GM13976 (cell line): ENCODE measurements at regions of chr1 and their contacts with region 1.

Region 1: GRCh38 chr1:205645519-205645918 is 13.7 kb upstream of the ELK4 start:
- DNase-seq: no peak
- CTCF ChIP-seq: no peak

Region 2: DNA sequence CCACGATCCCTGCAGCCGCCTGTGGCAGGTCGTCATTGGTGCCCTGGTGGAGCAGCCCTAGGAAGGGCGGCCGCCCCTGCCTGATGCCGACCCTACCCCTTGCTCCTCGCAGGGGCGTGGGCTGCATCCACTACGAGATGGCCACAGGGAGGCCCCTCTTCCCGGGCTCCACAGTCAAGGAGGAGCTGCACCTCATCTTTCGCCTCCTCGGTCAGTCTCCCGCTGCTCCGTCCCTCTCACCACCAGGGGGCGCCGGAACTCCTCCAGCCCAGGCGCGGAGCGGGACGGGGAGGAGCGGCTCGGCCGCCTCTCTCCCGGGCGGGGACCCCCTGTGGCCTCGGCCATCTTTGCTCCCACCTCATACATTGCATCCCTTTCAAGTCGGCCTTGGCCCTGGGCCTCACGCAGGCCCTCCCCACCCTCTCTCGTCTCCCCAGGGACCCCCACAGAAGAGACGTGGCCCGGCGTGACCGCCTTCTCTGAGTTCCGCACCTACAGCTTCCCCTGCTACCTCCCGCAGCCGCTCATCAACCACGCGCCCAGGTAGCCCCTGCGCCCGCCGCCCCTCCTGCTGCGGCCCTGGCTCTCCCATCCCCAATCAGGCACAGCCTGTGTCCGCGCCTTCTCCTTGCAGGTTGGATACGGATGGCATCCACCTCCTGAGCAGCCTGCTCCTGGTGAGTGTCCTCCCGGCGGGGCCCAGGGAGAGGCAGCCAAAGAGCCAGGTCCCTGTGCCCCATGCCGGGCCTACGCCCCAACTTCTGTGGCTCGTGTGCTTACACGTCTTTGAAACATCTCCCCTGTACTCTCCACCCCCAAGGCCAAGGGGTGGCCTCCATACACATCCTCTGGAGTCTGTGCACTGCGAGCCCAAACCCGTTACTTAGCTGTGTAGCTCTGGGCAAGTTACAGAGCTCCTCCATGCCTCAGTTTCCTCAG is 116.4 kb before region 1 on chr1:
- in situ Hi-C with region 1: loop called (anchors 10 kb)
- DNase-seq: peak; percentile 93
- CTCF ChIP-seq: peak; percentile 97

Region 3: GRCh38 chr1:205711104-205712020 is 65.8 kb after region 1 on chr1:
- in situ Hi-C with region 1: no loop called
- DNase-seq: peak; percentile 65
- CTCF ChIP-seq: peak; percentile 81